ENCODE measurements at regions of chr10 and their contacts with region 1.

Region 1: GRCh38 chr10:102072673-102073527 is 7.8 kb downstream of the HPS6 start:
- DNase-seq: peak; percentile 78
- H3K4me3 ChIP-seq: no peak overlapping the region
- H3K27ac ChIP-seq: no peak overlapping the region
- H3K4me1 ChIP-seq: peaks cover 0 to 4% of the 10 kb centered on the region in 2 experiments; a peak in 2 of 4 replicates
- H3K27me3 ChIP-seq: no peaks in the 10 kb centered on the region
- CTCF ChIP-seq: peak; percentile 92
- EP300 ChIP-seq: no peak
- RAD21 ChIP-seq: peak; percentile 84

Region 2: DNA sequence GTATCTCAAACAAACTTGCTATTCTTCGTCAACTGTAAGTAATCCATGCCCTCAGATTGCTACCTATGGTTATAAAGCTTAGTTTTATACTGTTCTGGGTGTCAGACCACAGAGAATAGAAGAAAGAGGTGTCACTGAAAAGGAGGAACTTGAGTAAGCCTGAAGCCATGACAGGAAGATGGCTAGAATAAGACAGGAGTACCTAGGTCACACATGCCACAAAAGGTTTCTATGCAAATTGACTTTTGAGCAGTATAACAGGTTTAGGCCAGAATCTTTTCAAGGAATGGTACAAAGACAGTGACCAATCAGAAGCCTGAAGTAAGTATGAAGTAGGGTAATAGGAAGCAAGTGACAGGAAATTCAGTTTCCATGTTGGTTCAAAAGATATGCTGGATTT is 401.4 kb before region 1 on chr10:
- CTCF ChIA-PET with region 1: no interaction called
- POLR2A ChIA-PET with region 1: no interaction called
- DNase-seq: no peak
- H3K4me3 ChIP-seq: no peak overlapping the region
- H3K27ac ChIP-seq: no peak overlapping the region
- H3K4me1 ChIP-seq: peaks cover 0 to 9% of the 10 kb centered on the region in 2 experiments; a peak in 1 of 4 replicates
- H3K27me3 ChIP-seq: no peaks in the 10 kb centered on the region
- CTCF ChIP-seq: no peak
- EP300 ChIP-seq: no peak
- RAD21 ChIP-seq: no peak

Region 3: GRCh38 chr10:101889256-101890210 is 183.4 kb before region 1 on chr10:
- CTCF ChIA-PET with region 1: interaction called, 25 read pairs
- POLR2A ChIA-PET with region 1: no interaction called
- DNase-seq: peak; percentile 66
- H3K4me3 ChIP-seq: no peak overlapping the region; a peak in 1 of 4 replicates
- H3K27ac ChIP-seq: no peak overlapping the region
- H3K4me1 ChIP-seq: peaks cover 0 to 2% of the 10 kb centered on the region in 2 experiments; a peak in 1 of 4 replicates
- H3K27me3 ChIP-seq: no peaks in the 10 kb centered on the region
- CTCF ChIP-seq: peak; percentile 97
- EP300 ChIP-seq: no peak
- RAD21 ChIP-seq: peak; percentile 86

Region 4: DNA sequence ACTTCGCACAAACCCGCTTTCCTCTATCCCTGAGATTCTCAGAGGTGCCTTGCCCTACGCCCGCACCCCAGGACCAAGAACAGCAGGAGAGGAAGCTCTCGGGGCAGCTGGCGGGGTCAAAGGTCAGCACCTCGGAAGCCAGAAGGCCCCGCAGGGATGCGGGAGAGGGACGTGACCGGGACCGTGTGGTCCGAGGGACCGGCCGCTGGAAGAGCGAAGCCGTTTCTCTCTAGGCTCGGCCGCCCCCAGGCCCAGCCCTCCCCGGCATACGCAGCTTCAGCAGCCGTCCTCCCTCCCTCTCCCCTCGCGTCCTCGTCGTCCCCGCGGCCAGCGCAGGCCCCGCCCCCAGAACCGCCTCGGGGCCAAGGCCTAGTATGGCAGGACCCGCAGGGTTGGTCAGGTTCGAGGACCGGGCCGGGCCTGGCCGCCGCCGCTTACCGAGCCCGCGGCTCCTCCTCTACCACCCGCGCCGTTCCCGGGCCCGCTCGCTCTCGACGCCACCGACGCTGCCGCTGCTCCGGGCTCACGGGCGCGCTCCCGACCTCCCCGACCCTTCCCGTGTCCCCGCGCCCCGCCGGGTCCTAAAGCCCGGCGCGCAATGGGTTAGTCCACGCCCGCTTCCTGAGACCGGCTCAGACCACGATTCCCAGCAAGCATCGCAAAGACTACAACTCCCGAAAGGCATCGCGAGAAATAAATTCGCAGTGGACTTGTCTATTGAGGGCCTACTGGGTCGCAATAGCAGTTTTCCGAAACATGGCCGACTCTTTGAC is 17.1 kb before region 1 on chr10 and contains the start of gene ARMH3:
- CTCF ChIA-PET with region 1: interaction called, 11 read pairs
- POLR2A ChIA-PET with region 1: no interaction called
- DNase-seq: peak; percentile 99
- H3K4me3 ChIP-seq: peak within 1 kb of the TSS; percentile 78 to 91
- H3K27ac ChIP-seq: peak within 1 kb of the TSS; percentile 74 to 78
- H3K4me1 ChIP-seq: peaks cover 3 to 8% of the 10 kb centered on the region in 2 experiments; a peak in 2 of 4 replicates
- H3K27me3 ChIP-seq: no peaks in the 10 kb centered on the region
- CTCF ChIP-seq: no peak
- EP300 ChIP-seq: no peak
- RAD21 ChIP-seq: no peak
- polyA plus RNA-seq, gene ARMH3: 12.1 and 16.8 TPM in 2 replicates

Region 5: GRCh38 chr10:102090772-102091171 is 17.9 kb after region 1 on chr10:
- CTCF ChIA-PET with region 1: interaction called, 13 read pairs
- POLR2A ChIA-PET with region 1: no interaction called
- DNase-seq: no peak
- H3K4me3 ChIP-seq: no peak overlapping the region
- H3K27ac ChIP-seq: no peak overlapping the region
- H3K4me1 ChIP-seq: no peaks in the 10 kb centered on the region
- H3K27me3 ChIP-seq: no peaks in the 10 kb centered on the region
- CTCF ChIP-seq: no peak
- EP300 ChIP-seq: no peak
- RAD21 ChIP-seq: no peak

Region 6: DNA sequence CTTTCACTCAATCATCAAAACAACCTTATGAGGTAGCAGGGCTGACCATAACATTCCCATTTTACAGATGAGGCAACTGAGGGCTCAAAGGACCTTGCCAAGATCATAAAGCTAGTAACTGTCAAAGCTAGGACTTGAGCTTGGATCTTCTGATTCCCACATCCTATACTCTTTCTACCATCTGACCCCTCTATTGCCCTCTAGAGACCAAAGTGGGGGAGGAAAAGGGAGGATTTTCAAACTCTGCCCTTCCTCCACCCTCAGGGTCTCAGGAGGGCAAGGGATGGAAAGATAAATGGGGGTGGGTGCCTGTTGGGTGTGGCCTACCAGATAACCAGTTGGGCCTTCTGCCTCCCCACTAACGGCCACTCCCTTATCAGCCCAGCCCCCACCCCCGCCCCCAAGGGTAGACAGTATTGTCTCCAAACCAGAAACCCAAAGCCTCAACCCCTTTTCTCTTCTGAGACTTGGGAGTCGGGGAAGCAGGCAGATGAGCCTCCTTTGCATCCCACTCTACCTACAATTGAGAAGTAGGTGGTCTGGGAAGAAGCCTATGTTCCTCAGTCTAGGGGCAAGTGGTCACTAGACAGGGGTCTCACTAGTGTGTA is 39.4 kb after region 1 on chr10:
- CTCF ChIA-PET with region 1: interaction called, 14 read pairs
- POLR2A ChIA-PET with region 1: no interaction called
- DNase-seq: peak; percentile 53
- H3K4me3 ChIP-seq: peak overlapping the region; percentile 72 to 84; a peak in 3 of 4 replicates
- H3K27ac ChIP-seq: peak overlapping the region in 1 of 2 experiments; percentile 36; a peak in 2 of 4 replicates
- H3K4me1 ChIP-seq: peaks cover 28 to 34% of the 10 kb centered on the region in 2 experiments
- H3K27me3 ChIP-seq: no peaks in the 10 kb centered on the region
- CTCF ChIP-seq: peak; percentile 40
- EP300 ChIP-seq: no peak
- RAD21 ChIP-seq: no peak

Measured in SK-N-SH (cell line).